PC-9 (cell line): ENCODE measurements at regions of chr20 and their contacts with region 1.

Region 1: GRCh38 chr20:14963262-14963663 is 625.9 kb upstream of the FLRT3 start:
- DNase-seq: peak; percentile 48 to 90
- H3K4me3 ChIP-seq: peak overlapping the region; percentile 29; the same call in 1 of the 2 replicates
- H3K27ac ChIP-seq: peak overlapping the region; percentile 69
- H3K4me1 ChIP-seq: peaks cover 6% of the 10 kb centered on the region; the same call in 1 of the 2 replicates
- H3K27me3 ChIP-seq: no peaks in the 10 kb centered on the region
- CTCF ChIP-seq: no peak

Region 2: GRCh38 chr20:14657266-14658005 is 305.8 kb before region 1 on chr20:
- CTCF ChIA-PET with region 1: no interaction called
- POLR2A ChIA-PET with region 1: no interaction called
- intact Hi-C with region 1: no loop called
- DNase-seq: no peak
- H3K4me3 ChIP-seq: no peak overlapping the region
- H3K27ac ChIP-seq: no peak overlapping the region
- H3K4me1 ChIP-seq: no peaks in the 10 kb centered on the region
- H3K27me3 ChIP-seq: no peaks in the 10 kb centered on the region
- CTCF ChIP-seq: no peak

Region 3: DNA sequence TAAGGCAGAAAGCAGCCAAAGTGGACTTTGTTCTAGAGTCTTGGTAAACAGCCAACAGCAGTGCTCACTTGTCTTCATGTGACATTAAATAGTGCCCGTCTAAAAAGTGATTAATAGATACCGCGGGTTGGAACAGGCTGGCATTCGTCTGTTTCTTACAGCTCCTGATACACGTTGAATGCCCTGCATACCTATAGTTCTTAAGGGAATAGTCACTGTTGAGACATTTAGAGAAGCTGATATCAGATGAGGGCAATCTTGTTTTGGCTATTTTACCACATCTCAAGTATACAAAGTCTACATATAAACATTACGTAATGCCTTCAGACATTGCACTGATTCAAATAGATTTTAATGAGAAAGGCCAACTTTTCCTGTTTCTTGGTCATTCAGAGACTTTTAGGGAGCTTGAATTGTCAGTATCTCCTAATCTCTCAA is 250.9 kb before region 1 on chr20:
- CTCF ChIA-PET with region 1: no interaction called
- POLR2A ChIA-PET with region 1: no interaction called
- intact Hi-C with region 1: loop called (anchors 2 kb)
- DNase-seq: peak; percentile 56 to 86
- H3K4me3 ChIP-seq: no peak overlapping the region
- H3K27ac ChIP-seq: peak overlapping the region; percentile 54
- H3K4me1 ChIP-seq: no peaks in the 10 kb centered on the region
- H3K27me3 ChIP-seq: no peaks in the 10 kb centered on the region
- CTCF ChIP-seq: no peak

Region 4: DNA sequence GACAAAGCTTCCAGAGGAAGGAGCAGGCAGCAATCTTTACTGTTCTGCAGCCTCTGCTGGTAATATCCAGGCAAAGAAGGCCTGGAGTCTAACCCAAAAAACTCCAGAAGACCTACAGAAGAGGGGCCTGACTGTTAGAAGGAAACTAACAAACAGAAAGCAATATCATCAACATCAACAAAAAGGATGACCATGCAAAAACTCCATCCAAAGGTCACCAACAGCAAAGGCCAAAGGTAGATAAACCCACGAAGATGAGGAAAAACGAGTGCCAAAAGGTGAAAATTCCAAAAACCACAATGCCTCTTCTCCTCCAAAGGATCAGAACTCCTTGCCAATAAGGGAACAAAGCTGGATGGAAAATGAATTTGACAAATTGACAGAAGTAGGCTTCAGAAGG is 156.0 kb before region 1 on chr20:
- CTCF ChIA-PET with region 1: no interaction called
- POLR2A ChIA-PET with region 1: no interaction called
- intact Hi-C with region 1: no loop called
- DNase-seq: no peak
- H3K4me3 ChIP-seq: no peak overlapping the region
- H3K27ac ChIP-seq: no peak overlapping the region
- H3K4me1 ChIP-seq: no peaks in the 10 kb centered on the region
- H3K27me3 ChIP-seq: no peaks in the 10 kb centered on the region
- CTCF ChIP-seq: no peak

Region 5: GRCh38 chr20:14919480-14920440 is 43.5 kb before region 1 on chr20:
- CTCF ChIA-PET with region 1: no interaction called
- POLR2A ChIA-PET with region 1: no interaction called
- intact Hi-C with region 1: loop called (anchors 5 kb)
- DNase-seq: peak; percentile 53 to 73
- H3K4me3 ChIP-seq: peak overlapping the region; percentile 43; the same call in 1 of the 2 replicates
- H3K27ac ChIP-seq: peak overlapping the region; percentile 63
- H3K4me1 ChIP-seq: peaks cover 25% of the 10 kb centered on the region
- H3K27me3 ChIP-seq: no peaks in the 10 kb centered on the region
- CTCF ChIP-seq: no peak

Region 6: DNA sequence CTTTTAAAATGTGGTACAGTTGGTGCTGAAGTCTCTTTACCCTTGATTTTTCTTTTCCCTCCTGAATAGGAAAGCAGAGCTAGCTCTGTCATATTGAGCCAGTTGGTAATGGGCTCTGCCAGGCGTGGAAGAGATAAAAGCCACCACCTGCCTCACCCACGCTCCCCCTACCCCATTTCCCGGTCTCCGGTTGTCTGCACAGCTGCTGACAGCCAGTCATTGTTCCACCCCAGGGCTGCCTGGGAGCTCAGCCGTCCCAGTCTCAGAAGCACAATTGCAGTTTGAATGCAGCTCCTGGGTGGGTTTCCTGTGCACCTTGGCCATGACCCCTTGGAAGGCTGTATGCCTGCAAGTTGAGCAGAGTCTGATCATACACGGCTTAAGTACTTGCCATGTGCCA is 49.3 kb after region 1 on chr20:
- CTCF ChIA-PET with region 1: no interaction called
- POLR2A ChIA-PET with region 1: no interaction called
- intact Hi-C with region 1: no loop called
- DNase-seq: no peak
- H3K4me3 ChIP-seq: no peak overlapping the region
- H3K27ac ChIP-seq: no peak overlapping the region
- H3K4me1 ChIP-seq: no peaks in the 10 kb centered on the region
- H3K27me3 ChIP-seq: no peaks in the 10 kb centered on the region
- CTCF ChIP-seq: no peak

Region 7: GRCh38 chr20:15091421-15092037 is 128.3 kb after region 1 on chr20:
- CTCF ChIA-PET with region 1: no interaction called
- POLR2A ChIA-PET with region 1: no interaction called
- intact Hi-C with region 1: no loop called
- DNase-seq: no peak
- H3K4me3 ChIP-seq: no peak overlapping the region
- H3K27ac ChIP-seq: no peak overlapping the region
- H3K4me1 ChIP-seq: no peaks in the 10 kb centered on the region
- H3K27me3 ChIP-seq: no peaks in the 10 kb centered on the region
- CTCF ChIP-seq: no peak